Naive thymus-derived CD4-positive, alpha-beta T cell (primary cell): ENCODE measurements at regions of chr11 and their contacts with region 1.

Region 1: GRCh38 chr11:66616379-66617154 is at the start of gene RBM14:
- DNase-seq: peak; percentile 96 to 99 (median 99)
- ATAC-seq: peak; percentile 88
- H3K4me3 ChIP-seq: peak within 1 kb of the TSS; percentile 97
- H3K4me3 Mint-ChIP-seq: peak within 1 kb of the TSS; percentile 86 to 99 (median 98)
- H3K27ac ChIP-seq: peak within 1 kb of the TSS; percentile 83
- H3K27ac Mint-ChIP-seq: peak within 1 kb of the TSS; percentile 96 to 99 (median 98)
- H3K4me1 ChIP-seq: peaks cover 29 to 30% of the 10 kb centered on the region in 2 donors
- H3K4me1 Mint-ChIP-seq: peaks cover 26 to 55% (median 47%) of the 10 kb centered on the region in 7 donors
- H3K27me3 ChIP-seq: no peaks in the 10 kb centered on the region
- H3K27me3 Mint-ChIP-seq: peaks cover 0 to 3% (median 0%) of the 10 kb centered on the region in 5 donors
- total RNA-seq, gene RBM14: 165 to 543 (median 192) TPM

Region 2: GRCh38 chr11:65418711-65419459 is 1197.7 kb before region 1 on chr11:
- CTCF ChIA-PET with region 1: no interaction called
- POLR2A ChIA-PET with region 1: no interaction called
- intact Hi-C with region 1: loop called in 1 of 2 experiments (anchors 5 kb)
- DNase-seq: peak; percentile 33 to 89 (median 48)
- ATAC-seq: peak; percentile 51
- H3K4me3 ChIP-seq: peak overlapping the region; percentile 82
- H3K4me3 Mint-ChIP-seq: peak overlapping the region; percentile 92 to 100 (median 97)
- H3K27ac ChIP-seq: peak overlapping the region; percentile 98
- H3K27ac Mint-ChIP-seq: peak overlapping the region; percentile 97 to 100 (median 99)
- H3K4me1 ChIP-seq: peaks cover 36 to 46% of the 10 kb centered on the region in 2 donors
- H3K4me1 Mint-ChIP-seq: peaks cover 36 to 65% (median 45%) of the 10 kb centered on the region in 7 donors
- H3K27me3 ChIP-seq: no peaks in the 10 kb centered on the region
- H3K27me3 Mint-ChIP-seq: peaks cover 0 to 15% (median 0%) of the 10 kb centered on the region in 5 donors

Region 3: GRCh38 chr11:66438504-66439466 is 177.8 kb before region 1 on chr11 and contains the start of gene MRPL11:
- CTCF ChIA-PET with region 1: interaction called, 3 read pairs
- POLR2A ChIA-PET with region 1: no interaction called
- intact Hi-C with region 1: loop called in 1 of 2 experiments (anchors 2 kb)
- DNase-seq: peak; percentile 74 to 93 (median 90)
- ATAC-seq: peak; percentile 100
- H3K4me3 ChIP-seq: peak within 1 kb of the TSS; percentile 86
- H3K4me3 Mint-ChIP-seq: peak within 1 kb of the TSS; percentile 83 to 96 (median 90)
- H3K27ac ChIP-seq: peak within 1 kb of the TSS; percentile 84
- H3K27ac Mint-ChIP-seq: peak within 1 kb of the TSS; percentile 84 to 99 (median 94)
- H3K4me1 ChIP-seq: peaks cover 4 to 5% of the 10 kb centered on the region in 2 donors
- H3K4me1 Mint-ChIP-seq: peaks cover 7 to 13% (median 11%) of the 10 kb centered on the region in 7 donors
- H3K27me3 ChIP-seq: no peaks in the 10 kb centered on the region
- H3K27me3 Mint-ChIP-seq: peaks cover 0 to 7% (median 0%) of the 10 kb centered on the region in 5 donors
- total RNA-seq, gene MRPL11: 23.5 to 64.1 (median 24.0) TPM

Region 4: GRCh38 chr11:66545701-66546367 is 70.7 kb before region 1 on chr11 and contains the start of gene ZDHHC24:
- CTCF ChIA-PET with region 1: no interaction called
- POLR2A ChIA-PET with region 1: interaction called, 11 read pairs
- intact Hi-C with region 1: loop called (anchors 1 to 2 kb)
- DNase-seq: peak; percentile 60 to 94 (median 74)
- ATAC-seq: peak; percentile 86
- H3K4me3 ChIP-seq: peak within 1 kb of the TSS; percentile 78
- H3K4me3 Mint-ChIP-seq: peak within 1 kb of the TSS; percentile 79 to 92 (median 88)
- H3K27ac ChIP-seq: peak within 1 kb of the TSS; percentile 90
- H3K27ac Mint-ChIP-seq: peak within 1 kb of the TSS; percentile 67 to 95 (median 89)
- H3K4me1 ChIP-seq: peaks cover 19 to 21% of the 10 kb centered on the region in 2 donors
- H3K4me1 Mint-ChIP-seq: peaks cover 13 to 46% (median 33%) of the 10 kb centered on the region in 7 donors
- H3K27me3 ChIP-seq: no peaks in the 10 kb centered on the region
- H3K27me3 Mint-ChIP-seq: peaks cover 0 to 16% (median 0%) of the 10 kb centered on the region in 5 donors
- total RNA-seq, gene ZDHHC24: 14.5 to 24.5 (median 19.2) TPM

Region 5: GRCh38 chr11:66626926-66627325 is 10.4 kb after region 1 on chr11:
- CTCF ChIA-PET with region 1: no interaction called
- POLR2A ChIA-PET with region 1: interaction called, 376 read pairs
- intact Hi-C with region 1: no loop called
- DNase-seq: no peak
- ATAC-seq: no peak
- H3K4me3 ChIP-seq: no peak overlapping the region
- H3K4me3 Mint-ChIP-seq: no peak overlapping the region
- H3K27ac ChIP-seq: no peak overlapping the region
- H3K27ac Mint-ChIP-seq: peak overlapping the region in 4 of 9 donors; percentile 20 to 56 (median 53)
- H3K4me1 ChIP-seq: peaks cover 13 to 24% of the 10 kb centered on the region in 2 donors
- H3K4me1 Mint-ChIP-seq: peaks cover 41 to 77% (median 61%) of the 10 kb centered on the region in 7 donors
- H3K27me3 ChIP-seq: no peaks in the 10 kb centered on the region
- H3K27me3 Mint-ChIP-seq: no peaks in the 10 kb centered on the region

Region 6: DNA sequence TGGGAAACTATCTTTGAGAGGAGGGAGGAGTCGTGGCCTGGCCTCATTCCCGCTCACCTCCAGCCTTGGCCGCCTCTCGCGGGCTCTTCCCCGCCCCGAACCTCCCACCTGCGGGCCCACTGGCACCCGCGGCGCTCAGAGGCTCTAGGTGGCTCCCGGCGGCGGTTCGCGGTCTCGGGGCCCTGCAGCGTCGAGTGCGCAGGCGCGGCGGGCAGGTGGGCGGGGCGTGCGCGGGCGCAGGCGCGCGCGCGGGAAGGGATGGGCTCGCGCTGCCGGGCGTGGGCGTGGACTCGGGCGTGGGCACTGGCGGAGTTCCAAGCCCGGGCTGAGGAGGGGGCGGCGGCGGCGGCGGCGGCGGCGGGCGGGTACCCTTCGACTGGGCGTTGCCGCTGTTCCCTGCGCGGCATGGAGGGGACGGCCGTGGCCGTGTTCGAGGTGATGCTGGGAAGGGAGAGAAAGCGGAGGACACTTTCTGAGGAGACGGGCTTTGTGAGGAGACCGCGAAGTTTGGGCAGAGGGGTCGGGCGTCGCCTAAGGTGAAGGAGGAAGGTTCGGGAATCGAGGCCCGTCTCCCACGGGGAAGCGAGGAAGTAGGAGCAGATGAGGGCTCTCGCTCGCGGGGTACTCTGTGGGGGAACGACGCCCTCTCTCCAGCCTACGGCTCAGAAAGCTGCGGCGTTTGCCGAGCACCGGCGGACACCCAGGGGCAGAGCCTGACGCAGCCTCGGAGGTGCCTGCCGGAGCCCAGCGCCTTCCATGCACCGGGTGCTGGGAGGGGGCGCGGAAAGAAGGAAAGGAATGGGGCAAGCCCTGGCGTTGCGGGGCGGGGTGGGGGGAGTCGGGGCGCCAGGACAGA is 128.1 kb after region 1 on chr11:
- CTCF ChIA-PET with region 1: no interaction called
- POLR2A ChIA-PET with region 1: no interaction called
- intact Hi-C with region 1: loop called in 1 of 2 experiments (anchors 1 kb)
- DNase-seq: peak; percentile 83 to 98 (median 91)
- ATAC-seq: peak; percentile 97
- H3K4me3 ChIP-seq: peak overlapping the region; percentile 83
- H3K4me3 Mint-ChIP-seq: peak overlapping the region; percentile 82 to 97 (median 94)
- H3K27ac ChIP-seq: peak overlapping the region; percentile 89
- H3K27ac Mint-ChIP-seq: peak overlapping the region; percentile 18 to 89 (median 81)
- H3K4me1 ChIP-seq: peaks cover 0 to 3% of the 10 kb centered on the region in 2 donors
- H3K4me1 Mint-ChIP-seq: peaks cover 0 to 16% (median 4%) of the 10 kb centered on the region in 7 donors
- H3K27me3 ChIP-seq: no peaks in the 10 kb centered on the region
- H3K27me3 Mint-ChIP-seq: peaks cover 0 to 10% (median 0%) of the 10 kb centered on the region in 5 donors